ENCODE measurements at regions of chr1 and their contacts with region 1.

Region 1: GRCh38 chr1:88891318-88891950 is at the start of gene GTF2B:
- DNase-seq: peak; percentile 96
- H3K4me3 ChIP-seq: peak within 1 kb of the TSS; percentile 68 to 91 (median 81)
- H3K27ac ChIP-seq: peak within 1 kb of the TSS; percentile 27
- H3K4me1 ChIP-seq: peaks cover 7% of the 10 kb centered on the region
- H3K27me3 ChIP-seq: peaks cover 1 to 2% of the 10 kb centered on the region in 2 experiments
- CTCF ChIP-seq: no peak
- POLR2A ChIP-seq: peak; percentile 98
- total RNA-seq, gene GTF2B: 18.0 and 19.8 TPM in 2 replicates

Region 2: DNA sequence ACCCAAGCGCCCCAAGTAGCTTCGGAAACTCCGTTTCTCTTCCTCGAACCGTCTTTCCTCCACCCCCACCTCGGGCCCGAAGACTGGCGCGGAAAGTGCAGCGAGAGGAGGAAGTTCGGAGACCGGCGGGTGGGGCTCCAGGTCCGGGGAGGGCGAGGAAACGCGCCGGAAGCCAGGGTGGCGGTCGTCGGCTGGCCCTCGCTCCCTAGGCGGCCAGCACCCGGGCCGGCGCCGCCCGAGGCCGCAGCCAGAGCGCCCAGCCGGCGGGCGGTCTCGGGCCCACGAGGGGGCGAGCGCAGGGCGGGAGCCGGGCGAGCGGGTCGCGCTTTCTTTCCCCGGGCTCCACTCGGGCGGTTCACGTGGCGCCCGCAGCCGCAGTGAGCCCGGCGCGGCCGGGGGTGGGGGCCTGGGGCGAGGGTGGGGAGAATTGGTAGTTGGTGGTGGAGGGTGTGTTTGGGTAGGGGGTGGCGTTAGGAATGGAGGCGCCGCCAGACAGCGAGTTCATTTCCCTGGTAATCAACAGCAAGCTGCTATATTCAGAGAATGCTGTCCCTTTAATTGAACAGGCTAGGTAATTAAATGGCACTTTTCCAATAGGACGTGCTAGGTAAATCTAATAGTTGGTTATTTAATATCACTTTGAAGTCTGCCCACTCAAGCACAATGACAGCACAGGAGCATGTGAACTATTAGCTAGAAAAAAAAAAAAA is 1556.1 kb before region 1 on chr1:
- CTCF ChIA-PET with region 1: no interaction called
- POLR2A ChIA-PET with region 1: no interaction called
- dilution Hi-C with region 1: no loop called
- intact Hi-C with region 1: loop called (anchors 10 kb)
- DNase-seq: peak; percentile 42
- H3K4me3 ChIP-seq: peak overlapping the region; percentile 61 to 88 (median 63)
- H3K27ac ChIP-seq: peak overlapping the region; percentile 66
- H3K4me1 ChIP-seq: peaks cover 20% of the 10 kb centered on the region
- H3K27me3 ChIP-seq: no peaks in the 10 kb centered on the region
- CTCF ChIP-seq: peak in 1 of 2 donors; percentile 40
- POLR2A ChIP-seq: peak; percentile 54